Body of pancreas (tissue), 4 donors: ENCODE measurements at regions of chr16 and their contacts with region 1.

Region 1: DNA sequence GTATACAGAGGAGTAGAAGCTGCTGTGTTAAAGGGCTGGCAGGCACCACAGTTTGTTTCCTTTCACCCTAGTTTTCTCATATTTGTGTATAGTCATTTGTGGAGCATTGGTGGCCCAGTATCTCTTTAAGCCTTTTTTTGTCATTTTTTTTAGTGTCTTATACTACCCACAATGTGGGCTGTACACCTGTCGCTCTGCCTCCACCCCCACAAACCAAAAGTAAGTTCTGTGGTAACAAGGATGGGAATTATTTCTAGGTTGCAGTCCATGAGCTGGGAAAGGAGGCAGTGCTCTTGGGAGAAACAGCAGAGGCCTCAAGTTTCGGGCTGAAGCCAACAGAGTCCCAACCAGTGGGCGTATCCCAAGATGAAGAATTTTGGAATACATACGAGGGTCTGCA is 6.2 kb downstream of the ZNF75A start:
- DNase-seq: no peak
- ATAC-seq: no peak
- H3K4me3 ChIP-seq: no peak overlapping the region
- H3K27ac ChIP-seq: no peak overlapping the region
- H3K4me1 ChIP-seq: no peaks in the 10 kb centered on the region
- H3K27me3 ChIP-seq: no peaks in the 10 kb centered on the region
- CTCF ChIP-seq: no peak
- POLR2A ChIP-seq: no peak

Region 2: GRCh38 chr16:3383045-3383448 is 71.6 kb after region 1 on chr16:
- intact Hi-C with region 1: loop called (anchors 5 kb)
- DNase-seq: no peak
- ATAC-seq: no peak
- H3K4me3 ChIP-seq: no peak overlapping the region
- H3K27ac ChIP-seq: no peak overlapping the region
- H3K4me1 ChIP-seq: no peaks in the 10 kb centered on the region
- H3K27me3 ChIP-seq: no peaks in the 10 kb centered on the region
- CTCF ChIP-seq: no peak
- POLR2A ChIP-seq: no peak

Region 3: GRCh38 chr16:3443108-3444031 is 131.9 kb after region 1 on chr16 and contains the starts of genes NAA60 and ZNF597:
- intact Hi-C with region 1: no loop called
- DNase-seq: peak; percentile 81 to 90 (median 86)
- ATAC-seq: peak; percentile 99
- H3K4me3 ChIP-seq: peak within 1 kb of the TSS; percentile 12 to 16
- H3K27ac ChIP-seq: peak within 1 kb of the TSS in 2 of 4 donors; percentile 57 to 73
- H3K4me1 ChIP-seq: peaks cover 17% of the 10 kb centered on the region
- H3K27me3 ChIP-seq: no peaks in the 10 kb centered on the region
- CTCF ChIP-seq: no peak
- POLR2A ChIP-seq: peak in 2 of 3 donors; percentile 55 to 59
- total RNA-seq, gene NAA60: 28.3 to 36.3 TPM
- total RNA-seq, gene ZNF597: 1.3 to 2.3 TPM